RWPE1 (cell line): ENCODE measurements at regions of chr17 and their contacts with region 1.

Region 1: DNA sequence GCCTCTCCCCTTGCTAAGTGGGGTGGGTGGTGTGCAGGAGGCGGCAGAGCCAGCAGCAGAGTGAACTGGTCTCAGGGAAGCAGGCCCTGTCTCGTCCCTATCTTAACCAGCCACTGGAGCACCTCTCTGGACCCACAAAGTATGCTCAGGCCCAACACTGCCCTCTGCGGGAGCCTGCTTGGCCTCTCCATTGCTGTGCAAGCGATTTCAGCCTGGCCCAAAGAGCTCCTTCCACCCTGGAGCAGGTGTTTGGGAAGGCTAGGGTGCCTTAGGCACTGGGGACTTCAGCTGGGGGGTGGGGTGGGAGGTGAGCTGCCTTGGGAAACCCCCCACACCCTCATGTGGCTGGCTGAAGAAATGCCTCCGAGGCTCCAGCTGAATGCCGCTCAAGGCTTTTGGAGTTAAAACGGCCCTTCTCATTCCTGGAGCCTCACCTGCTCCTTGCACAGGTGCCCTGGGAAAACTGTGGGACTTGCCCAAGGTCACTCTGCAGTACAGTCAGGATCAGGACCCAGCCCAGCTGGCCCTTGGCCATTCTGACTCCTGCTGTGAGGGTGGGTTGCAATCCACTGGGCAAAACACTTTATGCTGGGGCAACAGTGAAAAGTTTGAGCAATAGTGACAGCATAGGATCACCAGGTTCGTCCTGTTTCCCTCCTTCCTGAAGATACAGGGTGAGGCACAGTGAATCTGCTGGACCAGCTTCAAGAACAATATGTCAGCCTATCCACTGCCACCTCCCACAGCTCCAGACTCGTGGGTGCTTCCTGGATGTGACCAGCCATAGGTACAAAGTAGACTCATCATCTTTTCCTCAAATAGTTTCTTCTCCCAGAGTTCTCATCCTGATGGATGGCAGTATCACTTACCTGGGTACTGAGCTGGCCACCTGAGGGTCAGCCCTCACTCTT is 5.9 kb upstream of the UBE2O start:
- DNase-seq: peak; percentile 60
- H3K27ac ChIP-seq: no peak overlapping the region
- CTCF ChIP-seq: peak; percentile 61

Region 2: GRCh38 chr17:76318586-76318985 is 140.2 kb before region 1 on chr17:
- CTCF ChIA-PET with region 1: no interaction called
- POLR2A ChIA-PET with region 1: no interaction called
- DNase-seq: no peak
- H3K27ac ChIP-seq: no peak overlapping the region
- CTCF ChIP-seq: no peak

Region 3: GRCh38 chr17:76408052-76408849 is 50.6 kb before region 1 on chr17:
- CTCF ChIA-PET with region 1: interaction called, 27 read pairs
- POLR2A ChIA-PET with region 1: no interaction called
- DNase-seq: peak; percentile 60
- H3K27ac ChIP-seq: peak overlapping the region; percentile 12; the same call in 1 of the 2 replicates
- CTCF ChIP-seq: peak; percentile 99

Region 4: DNA sequence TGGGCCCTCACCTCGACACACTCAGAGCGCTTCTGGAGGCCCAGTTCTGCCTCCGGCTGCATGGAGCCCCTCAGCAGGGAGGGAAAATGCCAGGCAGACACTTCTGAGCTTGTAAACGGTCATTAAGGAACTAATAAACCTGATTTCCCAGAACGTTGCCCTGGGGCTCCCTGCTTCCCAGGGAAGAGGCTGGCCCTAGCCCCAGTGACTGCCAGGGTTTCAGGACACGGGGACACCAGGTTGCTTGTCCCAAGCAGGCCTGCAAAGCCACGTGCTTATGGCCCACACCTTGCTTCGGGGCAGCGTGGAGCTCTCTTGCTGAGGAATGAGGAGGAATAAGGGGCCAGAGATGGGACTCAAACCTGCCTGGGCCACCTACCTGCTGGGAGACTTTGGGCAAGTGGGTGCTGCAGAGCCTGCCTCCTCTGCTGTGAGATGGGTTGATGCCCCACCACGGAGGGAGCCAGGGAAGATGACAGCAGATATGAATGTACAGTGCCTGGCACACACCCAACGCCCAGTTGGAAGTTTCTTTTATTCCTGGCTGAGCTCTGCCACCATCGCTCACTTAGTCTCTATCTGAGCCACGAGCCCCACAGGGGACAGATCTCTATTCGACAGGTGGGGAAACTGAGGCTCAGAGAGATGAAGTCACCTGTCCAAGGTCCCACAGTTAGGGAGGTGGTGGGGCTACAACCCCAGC is 37.0 kb after region 1 on chr17:
- CTCF ChIA-PET with region 1: no interaction called
- POLR2A ChIA-PET with region 1: no interaction called
- DNase-seq: no peak
- H3K27ac ChIP-seq: peak overlapping the region; percentile 89
- CTCF ChIP-seq: no peak

Region 5: GRCh38 chr17:76506408-76507349 is 47.8 kb after region 1 on chr17:
- CTCF ChIA-PET with region 1: interaction called, 12 read pairs
- POLR2A ChIA-PET with region 1: interaction called, 6 read pairs
- DNase-seq: peak; percentile 81
- H3K27ac ChIP-seq: no peak overlapping the region
- CTCF ChIP-seq: peak; percentile 91